Activated CD8-positive, alpha-beta T cell treated with anti-CD3 and anti-CD28 coated beads for 36 hours (primary cell): ENCODE measurements at regions of chr2 and their contacts with region 1.

Region 1: DNA sequence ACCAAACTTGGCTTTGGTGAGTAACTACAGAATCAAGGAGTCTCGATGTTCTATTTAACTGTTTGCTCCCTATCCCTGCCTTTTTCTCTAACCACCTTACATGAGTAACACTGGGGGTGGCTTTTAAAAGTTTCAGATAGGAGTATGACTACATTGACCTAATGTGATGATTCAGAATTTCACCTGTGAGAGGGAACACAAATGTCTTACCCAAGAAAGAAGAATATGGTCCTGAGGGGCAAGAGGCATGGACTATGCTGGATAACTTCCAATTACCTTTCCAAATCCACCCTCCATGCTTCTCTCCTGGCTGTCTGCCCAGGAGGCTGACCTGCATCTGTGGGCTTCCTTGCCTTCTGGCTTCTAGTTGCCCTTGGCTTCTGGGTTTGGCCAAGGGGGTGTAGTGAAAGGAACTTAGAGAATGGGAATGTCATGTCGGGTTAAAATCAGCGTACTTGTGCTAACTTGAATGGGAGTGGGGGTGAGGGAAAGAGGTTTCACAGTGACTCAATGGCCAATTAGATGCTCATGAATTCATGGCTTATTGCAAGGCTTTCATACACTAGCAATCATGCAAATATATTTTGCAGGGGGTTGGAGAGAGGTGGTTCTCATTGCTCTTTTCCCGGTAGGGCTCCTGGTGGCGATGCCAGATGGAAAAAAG is 5.3 kb upstream of the IL36G start:
- DNase-seq: no peak
- ATAC-seq: peak; percentile 84
- H3K4me3 Mint-ChIP-seq: no peak overlapping the region
- H3K27ac Mint-ChIP-seq: no peak overlapping the region
- H3K4me1 Mint-ChIP-seq: peaks cover 15% of the 10 kb centered on the region
- H3K27me3 Mint-ChIP-seq: peaks cover 2% of the 10 kb centered on the region
- CTCF ChIP-seq: no peak

Region 2: GRCh38 chr2:112958428-112959108 is 14.0 kb before region 1 on chr2:
- CTCF ChIA-PET with region 1: interaction called, 12 read pairs
- POLR2A ChIA-PET with region 1: interaction called, 4 read pairs
- intact Hi-C with region 1: no loop called
- DNase-seq: peak; percentile 45
- ATAC-seq: peak; percentile 91
- H3K4me3 Mint-ChIP-seq: no peak overlapping the region
- H3K27ac Mint-ChIP-seq: no peak overlapping the region
- H3K4me1 Mint-ChIP-seq: no peaks in the 10 kb centered on the region
- H3K27me3 Mint-ChIP-seq: no peaks in the 10 kb centered on the region
- CTCF ChIP-seq: peak; percentile 88